B cell (primary cell): ENCODE measurements at regions of chr6 and their contacts with region 1.

Region 1: GRCh38 chr6:2940010-2940850 is 31.1 kb downstream of the SERPINB6 start:
- DNase-seq: peak; percentile 72
- ATAC-seq: peak; percentile 59
- H3K4me3 ChIP-seq: peak overlapping the region in 4 of 5 experiments; percentile 5 to 55 (median 42)
- H3K4me3 Mint-ChIP-seq: peak overlapping the region; percentile 86
- H3K27ac ChIP-seq: peak overlapping the region; percentile 31 to 68
- H3K27ac Mint-ChIP-seq: peak overlapping the region; percentile 93
- H3K4me1 ChIP-seq: peaks cover 45 to 62% of the 10 kb centered on the region in 2 donors
- H3K4me1 Mint-ChIP-seq: peaks cover 70% of the 10 kb centered on the region
- H3K27me3 ChIP-seq: no peaks in the 10 kb centered on the region
- H3K27me3 Mint-ChIP-seq: no peaks in the 10 kb centered on the region
- CTCF ChIP-seq: no peak

Region 2: DNA sequence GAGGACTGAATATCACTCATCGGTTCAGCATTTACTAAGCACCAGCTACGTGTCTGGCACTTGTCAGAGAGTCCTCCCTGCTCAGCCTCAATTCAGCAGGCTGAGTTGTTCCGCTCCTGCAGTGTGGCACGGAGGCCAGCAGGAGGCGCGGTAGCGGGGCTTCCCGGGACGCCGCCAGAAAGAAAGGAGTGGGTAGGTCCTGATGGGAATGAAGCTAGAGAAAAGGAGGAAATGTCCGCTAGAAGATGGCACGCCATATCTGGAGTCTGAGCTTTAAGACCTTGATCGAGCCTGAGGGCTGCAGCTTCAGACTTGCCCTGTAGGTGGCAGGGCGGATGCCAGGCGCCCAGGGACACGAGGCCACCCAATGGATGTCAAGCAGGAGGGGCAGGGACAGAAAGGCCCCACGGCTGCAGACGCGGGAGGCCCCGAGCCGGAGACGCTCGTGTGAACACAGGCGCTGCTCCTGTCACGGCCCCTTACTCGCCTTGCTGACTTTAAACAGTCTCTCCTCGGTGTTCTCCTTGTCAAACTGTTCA is 12.4 kb after region 1 on chr6:
- CTCF ChIA-PET with region 1: interaction called, 37 read pairs
- POLR2A ChIA-PET with region 1: interaction called, 7 read pairs
- intact Hi-C with region 1: no loop called
- DNase-seq: peak; percentile 69
- ATAC-seq: peak; percentile 97
- H3K4me3 ChIP-seq: peak overlapping the region in 1 of 5 experiments; percentile 15
- H3K4me3 Mint-ChIP-seq: peak overlapping the region; percentile 71
- H3K27ac ChIP-seq: no peak overlapping the region
- H3K27ac Mint-ChIP-seq: no peak overlapping the region
- H3K4me1 ChIP-seq: peaks cover 0 to 17% of the 10 kb centered on the region in 2 donors
- H3K4me1 Mint-ChIP-seq: peaks cover 12% of the 10 kb centered on the region
- H3K27me3 ChIP-seq: no peaks in the 10 kb centered on the region
- H3K27me3 Mint-ChIP-seq: no peaks in the 10 kb centered on the region
- CTCF ChIP-seq: peak; percentile 90